Heart right ventricle (tissue), 16 donors: ENCODE measurements at regions of chr14 and their contacts with region 1.

Region 1: GRCh38 chr14:21476925-21477681 is at the starts of genes RAB2B and TOX4:
- DNase-seq: peak; percentile 90 to 97
- ATAC-seq: peak; percentile 99 to 100 (median 99)
- H3K4me3 ChIP-seq: peak within 1 kb of the TSS; percentile 68 to 95 (median 83)
- H3K27ac ChIP-seq: peak within 1 kb of the TSS; percentile 59 to 96 (median 86)
- H3K4me1 ChIP-seq: peaks cover 5 to 26% (median 24%) of the 10 kb centered on the region in 9 donors
- H3K27me3 ChIP-seq: no peaks in the 10 kb centered on the region
- CTCF ChIP-seq: peak; percentile 84 to 99 (median 95)
- total RNA-seq, gene RAB2B: 14.8 to 25.8 (median 18.4) TPM
- total RNA-seq, gene TOX4: 74.4 to 104 (median 94.3) TPM

Region 2: GRCh38 chr14:21437063-21437901 is 39.8 kb before region 1 on chr14:
- intact Hi-C with region 1: loop called in 1 of 10 experiments (anchors 1 kb)
- DNase-seq: peak; percentile 98 to 100
- ATAC-seq: peak; percentile 99 to 100 (median 100)
- H3K4me3 ChIP-seq: peak overlapping the region; percentile 46 to 92 (median 82)
- H3K27ac ChIP-seq: peak overlapping the region; percentile 49 to 95 (median 90)
- H3K4me1 ChIP-seq: peaks cover 0 to 37% (median 28%) of the 10 kb centered on the region in 9 donors
- H3K27me3 ChIP-seq: no peaks in the 10 kb centered on the region
- CTCF ChIP-seq: no peak

Region 3: GRCh38 chr14:21455911-21456667 is 21.0 kb before region 1 on chr14 and contains the start of gene CHD8:
- intact Hi-C with region 1: loop called in 6 of 10 experiments (anchors 1 to 2 kb)
- DNase-seq: peak; percentile 99 to 100
- ATAC-seq: peak; percentile 99 to 100 (median 100)
- H3K4me3 ChIP-seq: peak within 1 kb of the TSS; percentile 77 to 93 (median 87)
- H3K27ac ChIP-seq: peak within 1 kb of the TSS; percentile 87 to 97 (median 94)
- H3K4me1 ChIP-seq: peaks cover 6 to 32% (median 25%) of the 10 kb centered on the region in 9 donors
- H3K27me3 ChIP-seq: no peaks in the 10 kb centered on the region
- CTCF ChIP-seq: peak; percentile 24 to 79 (median 69)
- total RNA-seq, gene CHD8: 31.1 to 47.5 (median 40.1) TPM

Region 4: DNA sequence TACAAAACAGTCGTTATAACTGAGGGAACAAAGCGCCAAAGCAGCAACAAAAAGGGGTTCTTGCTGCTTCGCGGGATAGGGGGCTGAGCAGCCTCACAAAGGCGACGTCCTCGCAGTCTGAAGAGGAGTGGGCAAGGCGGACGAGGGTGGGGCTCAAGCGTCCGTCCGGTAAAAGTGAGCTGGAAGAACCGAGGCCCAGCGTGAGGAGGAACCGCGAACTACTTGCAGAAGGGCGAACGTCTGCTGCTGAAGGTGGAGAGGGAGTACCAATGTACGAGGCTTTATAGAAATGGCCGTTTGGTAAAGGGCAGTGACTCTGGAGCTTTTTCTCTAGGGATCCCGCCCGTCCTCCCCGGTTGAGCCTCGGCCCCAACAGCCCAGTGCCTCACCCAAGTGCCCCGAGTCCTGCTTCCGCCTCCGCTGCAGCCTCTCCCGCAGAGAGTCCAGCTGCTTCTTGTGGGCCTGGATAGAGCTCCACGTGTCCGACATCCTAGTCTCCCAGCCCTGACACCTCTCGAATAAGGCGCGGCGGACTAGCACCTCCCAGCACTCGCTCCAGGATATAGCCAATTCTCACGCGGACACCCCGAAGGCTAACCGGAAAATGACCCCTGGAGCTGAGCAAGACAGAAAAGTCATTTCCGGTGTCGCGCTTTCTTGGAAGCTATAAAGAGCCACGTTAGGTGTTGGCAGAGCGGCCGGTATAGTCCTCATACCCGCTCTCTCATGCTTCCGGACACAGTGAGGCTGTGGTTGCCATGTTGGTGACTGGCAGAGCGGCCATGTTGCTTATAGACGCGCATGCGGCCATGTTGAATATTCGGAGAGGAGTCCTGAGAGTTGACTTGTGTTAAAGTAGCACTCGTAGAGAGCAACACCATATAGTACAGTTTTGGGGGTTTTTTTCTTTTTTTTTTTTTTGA is 33.9 kb after region 1 on chr14 and contains the start of gene METTL3:
- intact Hi-C with region 1: loop called in 4 of 10 experiments (anchors 1 to 5 kb)
- DNase-seq: peak; percentile 94 to 99
- ATAC-seq: peak; percentile 99 to 100 (median 99)
- H3K4me3 ChIP-seq: peak within 1 kb of the TSS; percentile 48 to 94 (median 78)
- H3K27ac ChIP-seq: peak within 1 kb of the TSS in 9 of 10 donors; percentile 77 to 90 (median 85)
- H3K4me1 ChIP-seq: peaks cover 0 to 30% (median 19%) of the 10 kb centered on the region in 9 donors
- H3K27me3 ChIP-seq: peaks cover 0 to under 1% (median 0%) of the 10 kb centered on the region in 7 donors
- CTCF ChIP-seq: peak in 1 of 9 donors; percentile 3
- total RNA-seq, gene METTL3: 21.0 to 30.3 (median 24.0) TPM

Region 5: DNA sequence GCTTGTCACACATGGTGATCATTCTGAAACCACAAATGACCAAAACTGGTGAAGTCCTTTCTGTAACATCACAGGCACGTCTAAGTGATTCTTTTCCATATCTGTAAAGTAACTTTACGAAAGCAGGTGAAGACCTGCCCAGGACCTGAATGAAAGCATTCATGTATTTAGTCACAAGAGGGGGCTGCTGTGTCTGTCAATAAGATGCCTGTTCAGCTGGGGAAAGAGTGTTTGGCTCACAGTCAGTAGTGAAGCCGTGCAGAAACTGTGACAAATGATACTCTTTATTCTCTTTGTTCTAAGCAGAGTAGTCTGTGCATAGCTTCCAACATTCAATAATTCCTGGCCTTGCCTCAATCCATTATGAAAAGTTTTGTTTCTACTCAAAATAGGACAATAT is 570.0 kb after region 1 on chr14:
- intact Hi-C with region 1: no loop called
- DNase-seq: no peak
- ATAC-seq: no peak
- H3K4me3 ChIP-seq: no peak overlapping the region
- H3K27ac ChIP-seq: no peak overlapping the region
- H3K4me1 ChIP-seq: no peaks in the 10 kb centered on the region
- H3K27me3 ChIP-seq: peaks cover 0 to 24% (median 0%) of the 10 kb centered on the region in 7 donors
- CTCF ChIP-seq: peak in 4 of 9 donors; percentile 9 to 32 (median 18)